ENCODE measurements at regions of chr4 and their contacts with region 1.

Region 1: GRCh38 chr4:48779998-48780742 is at the start of gene FRYL:
- DNase-seq: peak; percentile 99 to 100 (median 100)
- ATAC-seq: peak; percentile 94 to 98 (median 98)
- H3K4me3 ChIP-seq: peak within 1 kb of the TSS; percentile 71 to 99 (median 94)
- H3K27ac ChIP-seq: peak within 1 kb of the TSS; percentile 91 to 98 (median 97)
- H3K4me1 ChIP-seq: peaks cover 4 to 42% (median 34%) of the 10 kb centered on the region in 12 donors
- H3K27me3 ChIP-seq: no peaks in the 10 kb centered on the region
- CTCF ChIP-seq: no peak
- POLR2A ChIP-seq: peak in 1 of 2 donors; percentile 76
- total RNA-seq, gene FRYL: 27.0 to 61.3 (median 36.3) TPM

Region 2: DNA sequence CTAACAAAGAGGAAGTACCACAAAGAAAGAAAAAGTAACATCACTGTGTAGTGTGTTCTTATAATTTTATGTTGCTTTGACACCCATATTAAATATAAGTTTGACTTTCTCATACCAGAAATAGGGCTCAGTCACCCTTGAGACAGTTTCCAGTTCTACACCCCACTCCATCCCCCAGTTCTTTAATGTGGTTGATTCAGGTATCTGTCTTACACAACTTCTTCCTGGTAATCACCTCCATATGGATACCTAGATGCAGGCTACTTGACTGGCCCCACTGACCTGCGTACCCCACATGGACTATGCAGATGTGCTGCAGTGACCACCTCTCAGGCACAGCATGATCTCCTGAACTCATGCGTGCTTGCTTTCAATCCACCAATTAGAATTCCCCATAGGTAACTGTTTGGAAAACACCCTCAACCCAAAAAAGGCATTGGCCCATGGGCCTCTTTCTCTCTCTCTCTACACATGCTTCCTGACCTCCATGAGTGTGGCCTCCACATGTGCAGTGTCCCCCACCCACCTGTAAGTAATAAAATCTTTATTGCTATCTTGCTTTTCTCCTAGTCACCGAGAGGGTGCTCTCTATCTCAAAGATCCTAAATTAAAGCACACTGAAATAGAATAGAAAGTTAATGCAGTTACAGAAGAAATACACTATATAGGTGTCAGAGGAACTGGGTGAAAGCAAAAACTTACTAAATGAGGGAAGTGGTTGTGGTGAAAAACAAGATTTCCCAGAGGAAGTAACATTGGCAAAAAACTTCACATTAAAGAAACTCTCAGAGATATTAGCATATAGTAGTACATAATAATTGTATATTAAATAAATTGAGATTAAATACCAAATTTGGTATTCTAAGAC is 191.7 kb before region 1 on chr4:
- intact Hi-C with region 1: loop called in 6 of 10 experiments (anchors 5 to 10 kb)
- DNase-seq: no peak
- ATAC-seq: no peak
- H3K4me3 ChIP-seq: no peak overlapping the region
- H3K27ac ChIP-seq: no peak overlapping the region
- H3K4me1 ChIP-seq: peaks cover 0 to 23% (median 7%) of the 10 kb centered on the region in 12 donors
- H3K27me3 ChIP-seq: no peaks in the 10 kb centered on the region
- CTCF ChIP-seq: no peak
- POLR2A ChIP-seq: no peak

Region 3: GRCh38 chr4:48681856-48682255 is 98.3 kb before region 1 on chr4:
- intact Hi-C with region 1: loop called in 1 of 10 experiments (anchors 10 kb)
- DNase-seq: no peak
- ATAC-seq: peak in 2 of 4 donors; percentile 53 to 61
- H3K4me3 ChIP-seq: no peak overlapping the region
- H3K27ac ChIP-seq: peak overlapping the region in 2 of 12 donors; percentile 12 to 21
- H3K4me1 ChIP-seq: peaks cover 0 to 34% (median 13%) of the 10 kb centered on the region in 12 donors
- H3K27me3 ChIP-seq: no peaks in the 10 kb centered on the region
- CTCF ChIP-seq: peak in 10 of 12 donors; percentile 41 to 63 (median 55)
- POLR2A ChIP-seq: no peak

Region 4: GRCh38 chr4:48722509-48723446 is 57.4 kb before region 1 on chr4:
- intact Hi-C with region 1: loop called in 1 of 10 experiments (anchors 10 kb)
- DNase-seq: no peak
- ATAC-seq: peak in 3 of 4 donors; percentile 38 to 63 (median 47)
- H3K4me3 ChIP-seq: no peak overlapping the region
- H3K27ac ChIP-seq: peak overlapping the region in 10 of 12 donors; percentile 11 to 77 (median 57)
- H3K4me1 ChIP-seq: peaks cover 0 to 58% (median 23%) of the 10 kb centered on the region in 12 donors
- H3K27me3 ChIP-seq: no peaks in the 10 kb centered on the region
- CTCF ChIP-seq: no peak
- POLR2A ChIP-seq: no peak

Region 5: GRCh38 chr4:48801734-48802133 is 21.6 kb after region 1 on chr4:
- intact Hi-C with region 1: loop called in 2 of 10 experiments (anchors 2 kb)
- DNase-seq: peak in 2 of 5 donors; percentile 56 to 66
- ATAC-seq: peak; percentile 58 to 88 (median 66)
- H3K4me3 ChIP-seq: peak overlapping the region in 1 of 12 donors; percentile 1
- H3K27ac ChIP-seq: peak overlapping the region in 10 of 12 donors; percentile 33 to 73 (median 64)
- H3K4me1 ChIP-seq: peaks cover 0 to 41% (median 19%) of the 10 kb centered on the region in 12 donors
- H3K27me3 ChIP-seq: no peaks in the 10 kb centered on the region
- CTCF ChIP-seq: no peak
- POLR2A ChIP-seq: no peak

Region 6: GRCh38 chr4:48879541-48880442 is 99.6 kb after region 1 on chr4:
- intact Hi-C with region 1: no loop called
- DNase-seq: no peak
- ATAC-seq: no peak
- H3K4me3 ChIP-seq: no peak overlapping the region
- H3K27ac ChIP-seq: no peak overlapping the region
- H3K4me1 ChIP-seq: no peaks in the 10 kb centered on the region
- H3K27me3 ChIP-seq: no peaks in the 10 kb centered on the region
- CTCF ChIP-seq: no peak
- POLR2A ChIP-seq: no peak

Region 7: GRCh38 chr4:48906206-48907173 is 126.3 kb after region 1 on chr4 and contains the start of gene OCIAD2:
- intact Hi-C with region 1: loop called in 2 of 10 experiments (anchors 5 to 10 kb)
- DNase-seq: peak; percentile 64 to 76 (median 71)
- ATAC-seq: peak; percentile 51 to 89 (median 80)
- H3K4me3 ChIP-seq: peak within 1 kb of the TSS; percentile 56 to 84 (median 70)
- H3K27ac ChIP-seq: peak within 1 kb of the TSS in 11 of 12 donors; percentile 24 to 78 (median 48)
- H3K4me1 ChIP-seq: peaks cover 0 to 18% (median 4%) of the 10 kb centered on the region in 12 donors
- H3K27me3 ChIP-seq: no peaks in the 10 kb centered on the region
- CTCF ChIP-seq: peak in 5 of 12 donors; percentile 10 to 42 (median 21)
- POLR2A ChIP-seq: no peak
- total RNA-seq, gene OCIAD2: 14.4 to 47.9 (median 22.7) TPM